GM10248 (cell line): ENCODE measurements at regions of chr19 and their contacts with region 1.

Region 1: GRCh38 chr19:6218491-6219162 is 61.1 kb downstream of the MLLT1 start:
- DNase-seq: peak; percentile 94
- CTCF ChIP-seq: peak; percentile 97

Region 2: GRCh38 chr19:6048808-6049405 is 169.7 kb before region 1 on chr19:
- CTCF ChIA-PET with region 1: interaction called, 15 read pairs
- POLR2A ChIA-PET with region 1: no interaction called
- DNase-seq: peak; percentile 89
- CTCF ChIP-seq: peak; percentile 93

Region 3: GRCh38 chr19:6199240-6199983 is 19.2 kb before region 1 on chr19:
- CTCF ChIA-PET with region 1: interaction called, 30 read pairs
- POLR2A ChIA-PET with region 1: no interaction called
- DNase-seq: peak; percentile 100
- CTCF ChIP-seq: no peak

Region 4: DNA sequence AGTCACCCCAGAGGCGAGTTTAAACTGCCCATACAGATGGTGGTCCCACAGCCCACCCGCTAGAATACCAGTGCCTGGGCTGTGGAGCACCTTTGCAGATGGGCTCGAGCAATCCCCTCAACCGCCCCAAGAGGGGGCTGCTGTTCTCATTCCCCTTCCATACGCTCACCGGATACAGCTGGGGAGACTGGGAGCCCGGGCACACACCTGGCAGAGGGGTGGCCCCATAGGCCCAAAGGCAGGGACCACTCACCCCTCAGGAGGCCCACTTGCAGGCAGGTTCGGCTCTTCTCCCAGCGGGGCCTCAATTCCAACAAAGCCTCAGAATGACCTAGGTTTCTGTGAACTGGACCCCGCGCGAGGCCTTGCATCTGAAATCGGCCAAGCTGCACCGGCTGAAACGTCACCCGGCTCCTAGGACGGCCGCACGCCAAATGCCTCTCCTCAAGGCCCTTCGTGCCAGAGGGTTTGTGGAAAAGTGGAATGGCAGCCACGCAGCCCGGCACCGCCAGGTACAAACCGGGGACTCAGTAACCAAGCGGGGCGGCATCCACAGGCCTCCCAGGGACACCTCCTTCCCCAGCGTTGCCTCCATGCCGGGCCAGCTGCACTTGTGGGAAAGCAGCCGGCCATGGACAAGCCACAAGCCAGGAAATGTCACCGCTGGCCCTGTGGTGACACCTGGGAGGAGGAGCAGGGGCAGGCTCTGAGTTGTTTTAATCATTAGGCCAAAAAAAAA is 42.5 kb after region 1 on chr19:
- CTCF ChIA-PET with region 1: interaction called, 11 read pairs
- POLR2A ChIA-PET with region 1: no interaction called
- DNase-seq: peak; percentile 56
- CTCF ChIP-seq: peak; percentile 41

Region 5: GRCh38 chr19:6297202-6297601 is 78.6 kb after region 1 on chr19:
- CTCF ChIA-PET with region 1: interaction called, 43 read pairs
- POLR2A ChIA-PET with region 1: no interaction called
- DNase-seq: no peak
- CTCF ChIP-seq: no peak

Region 6: GRCh38 chr19:6862673-6863078 is 644.0 kb after region 1 on chr19:
- CTCF ChIA-PET with region 1: interaction called, 15 read pairs
- POLR2A ChIA-PET with region 1: no interaction called
- DNase-seq: peak; percentile 87
- CTCF ChIP-seq: peak; percentile 97